Dendritic cell treated with granulocyte-macrophage colony-stimulating factor and Interleukin-4, amounts not matched to agents 40 ng/mL and 50 ng/mL, for 4 days (primary cell): ENCODE measurements at regions of chr1 and their contacts with region 1.

Region 1: DNA sequence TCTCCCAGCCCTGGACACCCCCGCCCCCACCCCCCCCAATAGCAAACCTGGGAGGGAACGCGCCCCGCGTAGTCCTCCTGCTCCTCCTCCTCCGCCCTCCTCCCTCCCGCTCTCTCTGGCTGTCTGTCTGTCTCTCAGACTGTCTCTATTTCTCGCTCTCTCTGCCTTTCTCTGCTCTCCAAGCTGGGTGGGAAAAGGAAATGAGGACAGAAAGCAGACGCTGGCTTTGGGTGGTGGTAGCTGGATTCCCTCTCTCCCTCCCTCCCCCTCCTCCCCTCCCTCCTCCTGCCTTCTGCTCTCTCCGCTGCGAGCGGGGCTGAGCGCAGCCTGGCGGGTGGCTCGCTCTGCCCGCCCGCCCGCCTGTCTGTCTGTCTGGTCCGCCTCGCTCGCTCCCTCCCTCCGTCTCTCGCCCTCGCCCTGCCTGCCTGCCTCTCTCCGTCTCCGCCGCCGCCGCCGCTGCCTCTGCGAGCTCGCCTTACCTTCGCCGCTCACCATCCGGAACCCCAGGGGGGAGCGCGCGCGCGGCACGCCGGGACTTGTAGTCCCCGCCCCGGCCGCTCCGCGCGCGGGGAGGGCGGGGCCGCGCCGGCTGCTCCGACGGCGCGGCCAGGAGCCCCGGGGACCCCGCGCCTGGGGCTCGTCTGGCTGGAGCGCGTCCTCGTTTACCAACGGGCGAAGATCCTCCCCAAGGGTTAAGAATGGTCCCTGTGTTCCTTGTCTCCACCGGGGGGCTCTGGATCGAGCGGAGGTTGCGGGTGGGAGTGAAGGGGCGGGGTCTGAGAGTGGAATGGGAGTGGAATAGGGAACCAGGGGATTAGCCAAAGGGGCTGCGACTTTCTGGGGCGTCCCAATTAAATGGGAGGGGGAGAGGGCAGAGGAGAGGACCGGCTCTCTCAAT is at the start of gene AHDC1:
- H3K4me3 Mint-ChIP-seq: peak within 1 kb of the TSS; percentile 88
- H3K27ac Mint-ChIP-seq: peak within 1 kb of the TSS; percentile 81
- H3K4me1 Mint-ChIP-seq: peaks cover 35% of the 10 kb centered on the region
- H3K27me3 Mint-ChIP-seq: peaks cover 13% of the 10 kb centered on the region

Region 2: DNA sequence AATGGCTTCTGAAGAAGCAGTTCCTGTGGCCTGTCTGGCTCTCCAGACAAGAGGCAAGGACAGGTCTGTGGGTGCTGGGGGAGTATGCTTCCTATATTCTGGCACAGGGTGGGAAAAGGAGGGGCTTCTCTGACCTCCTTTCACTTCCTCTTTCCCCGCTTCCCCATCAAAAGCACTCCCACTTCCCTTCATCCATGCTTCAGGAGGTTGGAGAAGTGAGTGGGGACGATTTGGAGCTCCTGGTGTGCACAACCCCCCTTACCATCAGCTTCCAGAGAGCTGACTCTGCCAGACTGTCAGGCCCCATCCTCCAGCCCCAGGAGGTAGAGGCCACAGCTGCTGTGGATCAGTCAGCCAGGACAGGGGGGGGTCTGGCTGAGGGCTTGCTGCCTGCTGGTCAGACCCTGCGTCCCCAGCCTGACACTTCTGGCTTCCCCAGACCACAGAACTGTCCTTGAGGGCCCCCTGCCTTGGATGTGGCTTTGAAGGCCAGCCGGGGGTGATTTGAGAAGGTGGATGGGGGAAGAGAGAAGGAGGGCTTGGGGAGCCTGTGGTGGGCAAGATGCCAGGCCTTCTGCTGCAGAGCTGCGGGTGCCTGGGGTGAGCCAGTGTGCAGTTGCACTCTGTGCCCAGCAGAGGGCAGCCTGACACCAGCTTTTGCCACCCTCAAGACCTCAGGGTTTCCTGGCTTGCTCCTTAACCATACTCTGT is 303.4 kb before region 1 on chr1:
- intact Hi-C with region 1: loop called (anchors 5 kb)
- H3K4me3 Mint-ChIP-seq: no peak overlapping the region
- H3K27ac Mint-ChIP-seq: peak overlapping the region; percentile 88
- H3K4me1 Mint-ChIP-seq: peaks cover 39% of the 10 kb centered on the region
- H3K27me3 Mint-ChIP-seq: no peaks in the 10 kb centered on the region

Region 3: GRCh38 chr1:27402349-27402754 is 201.6 kb before region 1 on chr1:
- intact Hi-C with region 1: loop called (anchors 1 kb)
- H3K4me3 Mint-ChIP-seq: no peak overlapping the region
- H3K27ac Mint-ChIP-seq: peak overlapping the region; percentile 83
- H3K4me1 Mint-ChIP-seq: peaks cover 56% of the 10 kb centered on the region
- H3K27me3 Mint-ChIP-seq: peaks cover 2% of the 10 kb centered on the region

Region 4: DNA sequence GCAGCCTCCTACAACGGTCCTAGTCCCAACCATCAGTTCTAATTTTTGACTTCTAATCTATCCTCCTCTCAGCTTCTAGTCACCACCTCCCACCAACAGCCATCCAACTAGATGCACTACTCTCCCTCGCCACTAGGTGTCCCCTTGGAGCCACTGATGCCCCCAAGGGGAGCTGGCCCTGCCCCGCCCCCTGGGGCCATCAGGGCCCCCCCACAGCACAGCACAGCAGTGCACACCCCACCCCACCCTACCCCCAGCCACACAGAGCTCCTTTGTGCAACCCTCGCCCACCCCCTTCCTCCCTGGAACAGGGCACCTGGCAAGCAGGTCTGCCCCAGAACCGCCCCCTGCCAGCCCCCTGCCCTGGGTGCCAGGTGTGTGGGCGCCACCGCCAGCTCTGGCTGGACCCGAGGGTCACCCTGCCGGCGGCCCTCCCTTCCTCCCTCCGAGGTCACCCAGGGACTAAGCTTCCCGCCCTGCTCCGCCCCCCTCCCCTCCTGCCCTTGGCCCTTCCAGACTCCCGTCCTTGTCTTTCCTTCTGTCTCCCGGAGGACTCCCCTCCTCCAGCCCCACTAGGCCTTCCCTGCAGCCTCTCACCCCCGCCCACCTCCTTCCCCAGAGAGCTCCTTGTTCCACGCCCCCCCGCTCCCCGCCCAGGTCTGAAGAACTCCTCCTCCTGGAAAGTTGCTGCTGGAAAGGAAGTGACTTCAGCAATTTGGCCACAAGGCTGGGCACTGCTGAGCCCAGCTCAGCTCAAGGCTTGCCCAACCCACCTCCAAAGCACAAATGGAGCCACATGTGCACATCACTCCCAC is 46.9 kb before region 1 on chr1:
- intact Hi-C with region 1: loop called (anchors 1 kb)
- H3K4me3 Mint-ChIP-seq: peak overlapping the region; percentile 50
- H3K27ac Mint-ChIP-seq: peak overlapping the region; percentile 57
- H3K4me1 Mint-ChIP-seq: peaks cover 61% of the 10 kb centered on the region
- H3K27me3 Mint-ChIP-seq: peaks cover 5% of the 10 kb centered on the region

Region 5: GRCh38 chr1:27662707-27663393 is 58.9 kb after region 1 on chr1:
- intact Hi-C with region 1: loop called (anchors 1 kb)
- H3K4me3 Mint-ChIP-seq: peak overlapping the region; percentile 10
- H3K27ac Mint-ChIP-seq: peak overlapping the region; percentile 95
- H3K4me1 Mint-ChIP-seq: peaks cover 81% of the 10 kb centered on the region
- H3K27me3 Mint-ChIP-seq: no peaks in the 10 kb centered on the region

Region 6: DNA sequence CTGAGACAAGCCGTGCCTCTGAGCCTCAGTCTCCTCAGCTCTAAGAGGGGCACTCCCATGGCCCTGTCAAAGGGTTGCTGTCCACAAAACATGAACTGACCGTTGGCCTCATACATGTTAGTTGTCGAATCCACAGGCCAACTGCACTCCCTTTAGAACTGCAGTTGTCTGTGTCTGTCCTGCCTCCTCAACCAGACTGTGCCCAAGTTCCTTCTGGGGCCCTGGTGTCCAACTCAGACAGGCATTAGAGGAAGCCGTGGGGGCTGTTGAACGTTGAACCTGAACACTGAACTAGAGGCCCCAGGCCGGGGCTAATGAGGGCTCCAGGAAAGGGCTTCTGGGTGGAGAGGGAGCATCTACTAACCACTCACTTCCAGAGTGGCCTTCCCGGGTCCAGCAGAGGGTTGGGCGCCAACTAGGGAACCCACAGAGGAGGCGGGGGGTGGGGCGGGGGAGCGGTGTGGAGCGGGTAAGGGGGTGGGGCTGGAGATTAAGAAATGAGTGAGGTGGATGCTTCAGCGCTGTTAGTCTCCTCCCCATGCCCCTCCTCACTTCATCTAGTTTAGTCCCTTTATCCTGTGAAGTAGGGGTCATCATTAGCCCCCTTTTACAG is 987.9 kb after region 1 on chr1 and contains the start of gene RAB42:
- intact Hi-C with region 1: no loop called
- H3K4me3 Mint-ChIP-seq: peak within 1 kb of the TSS; percentile 86
- H3K27ac Mint-ChIP-seq: peak within 1 kb of the TSS; percentile 76
- H3K4me1 Mint-ChIP-seq: peaks cover 47% of the 10 kb centered on the region
- H3K27me3 Mint-ChIP-seq: no peaks in the 10 kb centered on the region